Left lung (tissue), 14 donors: ENCODE measurements at regions of chr10 and their contacts with region 1.

Region 1: DNA sequence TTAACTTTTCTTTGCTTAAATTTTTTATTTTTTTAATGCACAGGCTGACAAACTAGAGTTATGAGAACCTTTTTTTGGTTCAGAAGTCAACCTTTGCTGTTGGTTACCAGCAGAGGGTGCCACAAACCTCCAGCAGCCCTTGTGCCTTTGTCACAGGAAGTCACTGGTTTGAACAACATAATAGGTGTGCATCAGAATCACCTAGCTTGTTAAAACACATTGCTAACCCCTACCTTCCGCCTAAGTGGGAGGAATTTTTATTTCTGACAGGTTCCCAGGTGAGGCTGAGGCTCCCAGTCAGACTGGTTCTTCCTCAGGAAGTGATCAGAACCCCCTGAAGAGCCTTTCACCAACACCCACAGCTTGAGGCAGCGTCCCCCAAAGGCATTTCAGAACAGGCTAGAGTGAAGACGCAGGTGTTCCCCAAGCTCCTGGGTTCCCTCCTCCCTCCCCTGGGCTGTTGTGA is 22.6 kb upstream of the VDAC2 start:
- DNase-seq: peak in 2 of 4 donors; percentile 40 to 53
- ATAC-seq: peak; percentile 68
- H3K4me3 ChIP-seq: no peak overlapping the region
- H3K27ac ChIP-seq: no peak overlapping the region
- H3K4me1 ChIP-seq: peaks cover 0 to 24% of the 10 kb centered on the region in 2 donors
- H3K27me3 ChIP-seq: no peaks in the 10 kb centered on the region
- CTCF ChIP-seq: peak; percentile 41 to 53

Region 2: GRCh38 chr10:74917481-74918077 is 270.4 kb before region 1 on chr10:
- intact Hi-C with region 1: no loop called
- DNase-seq: no peak
- ATAC-seq: peak; percentile 63
- H3K4me3 ChIP-seq: no peak overlapping the region
- H3K27ac ChIP-seq: no peak overlapping the region
- H3K4me1 ChIP-seq: peaks cover 9 to 20% of the 10 kb centered on the region in 2 donors
- H3K27me3 ChIP-seq: no peaks in the 10 kb centered on the region
- CTCF ChIP-seq: no peak

Region 3: GRCh38 chr10:75014516-75015230 is 173.3 kb before region 1 on chr10:
- intact Hi-C with region 1: no loop called
- DNase-seq: no peak
- ATAC-seq: no peak
- H3K4me3 ChIP-seq: no peak overlapping the region
- H3K27ac ChIP-seq: no peak overlapping the region
- H3K4me1 ChIP-seq: peaks cover 7 to 20% of the 10 kb centered on the region in 2 donors
- H3K27me3 ChIP-seq: no peaks in the 10 kb centered on the region
- CTCF ChIP-seq: no peak

Region 4: GRCh38 chr10:75229971-75230370 is 42.0 kb after region 1 on chr10:
- intact Hi-C with region 1: loop called in 1 of 2 experiments (anchors 5 kb)
- DNase-seq: no peak
- ATAC-seq: no peak
- H3K4me3 ChIP-seq: no peak overlapping the region
- H3K27ac ChIP-seq: peak overlapping the region in 1 of 2 donors; percentile 18
- H3K4me1 ChIP-seq: peaks cover 24 to 58% of the 10 kb centered on the region in 2 donors
- H3K27me3 ChIP-seq: no peaks in the 10 kb centered on the region
- CTCF ChIP-seq: no peak